ENCODE measurements at regions of chr20 and their contacts with region 1.

Region 1: GRCh38 chr20:5135363-5136012 is 8.7 kb downstream of the CDS2 start:
- DNase-seq: no peak
- ATAC-seq: peak; percentile 30 to 80 (median 60)
- H3K4me3 ChIP-seq: peak overlapping the region in 1 of 10 donors; percentile 10
- H3K27ac ChIP-seq: peak overlapping the region; percentile 27 to 99 (median 58)
- H3K4me1 ChIP-seq: peaks cover 2 to 86% (median 53%) of the 10 kb centered on the region in 9 donors
- H3K27me3 ChIP-seq: no peaks in the 10 kb centered on the region
- CTCF ChIP-seq: peak in 2 of 9 donors; percentile 14 to 26

Region 2: GRCh38 chr20:5177071-5177470 is 41.6 kb after region 1 on chr20:
- intact Hi-C with region 1: loop called in 2 of 10 experiments (anchors 5 kb)
- DNase-seq: no peak
- ATAC-seq: no peak
- H3K4me3 ChIP-seq: no peak overlapping the region
- H3K27ac ChIP-seq: peak overlapping the region in 4 of 10 donors; percentile 26 to 87 (median 50)
- H3K4me1 ChIP-seq: peaks cover 35 to 93% (median 71%) of the 10 kb centered on the region in 9 donors
- H3K27me3 ChIP-seq: no peaks in the 10 kb centered on the region
- CTCF ChIP-seq: no peak

Region 3: DNA sequence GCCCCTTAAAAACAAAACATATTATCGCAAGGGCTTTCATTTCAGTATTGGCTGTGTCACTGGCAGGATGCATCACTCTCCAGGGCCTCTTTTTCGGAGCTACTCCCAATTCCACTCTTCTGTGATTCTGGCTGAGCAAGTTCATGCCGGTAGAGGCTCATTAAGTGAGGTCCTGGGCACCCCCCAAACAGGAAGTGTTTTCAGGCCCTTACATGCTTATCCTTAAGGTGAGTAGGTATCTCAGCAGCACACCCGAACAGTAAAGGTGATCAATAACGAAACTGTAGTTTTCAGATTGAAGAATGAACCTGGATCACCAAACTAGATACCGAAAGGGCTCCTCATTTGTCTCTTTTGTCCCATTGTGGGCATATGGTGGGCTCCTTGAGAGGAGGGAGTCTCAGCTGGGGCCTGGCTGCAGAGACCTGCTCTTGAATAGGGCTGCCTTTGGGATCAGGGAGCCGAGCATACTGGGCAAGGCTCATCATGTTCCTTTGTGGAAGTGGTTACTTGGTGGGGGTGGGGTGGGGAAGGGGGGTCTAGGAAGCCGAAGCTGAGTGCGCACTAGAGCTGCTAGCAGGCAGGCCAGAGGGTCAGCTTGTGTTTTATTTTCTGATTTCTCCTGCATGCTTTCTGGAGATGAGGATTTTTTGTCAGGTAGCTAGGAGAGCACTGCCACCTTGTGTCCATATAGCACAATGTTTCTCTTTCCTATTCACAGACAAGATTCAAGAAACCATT is 56.5 kb after region 1 on chr20:
- intact Hi-C with region 1: no loop called
- DNase-seq: peak in 1 of 2 donors; percentile 56
- ATAC-seq: peak in 7 of 8 donors; percentile 68 to 85 (median 79)
- H3K4me3 ChIP-seq: no peak overlapping the region
- H3K27ac ChIP-seq: peak overlapping the region in 9 of 10 donors; percentile 11 to 79 (median 46)
- H3K4me1 ChIP-seq: peaks cover 6 to 32% (median 21%) of the 10 kb centered on the region in 9 donors
- H3K27me3 ChIP-seq: no peaks in the 10 kb centered on the region
- CTCF ChIP-seq: peak; percentile 69 to 87 (median 80)

Region 4: GRCh38 chr20:5205348-5206210 is 70.1 kb after region 1 on chr20:
- intact Hi-C with region 1: no loop called
- DNase-seq: peak; percentile 60 to 67
- ATAC-seq: peak; percentile 85 to 91 (median 90)
- H3K4me3 ChIP-seq: no peak overlapping the region
- H3K27ac ChIP-seq: no peak overlapping the region
- H3K4me1 ChIP-seq: peaks cover 0 to 19% (median 4%) of the 10 kb centered on the region in 9 donors
- H3K27me3 ChIP-seq: no peaks in the 10 kb centered on the region
- CTCF ChIP-seq: peak; percentile 57 to 90 (median 89)

Measured in heart right ventricle (tissue), 16 donors.